Activated B cell treated with CpG ODN at 0.5 μM for 24 hours (primary cell): ENCODE measurements at regions of chr12 and their contacts with region 1.

Region 1: DNA sequence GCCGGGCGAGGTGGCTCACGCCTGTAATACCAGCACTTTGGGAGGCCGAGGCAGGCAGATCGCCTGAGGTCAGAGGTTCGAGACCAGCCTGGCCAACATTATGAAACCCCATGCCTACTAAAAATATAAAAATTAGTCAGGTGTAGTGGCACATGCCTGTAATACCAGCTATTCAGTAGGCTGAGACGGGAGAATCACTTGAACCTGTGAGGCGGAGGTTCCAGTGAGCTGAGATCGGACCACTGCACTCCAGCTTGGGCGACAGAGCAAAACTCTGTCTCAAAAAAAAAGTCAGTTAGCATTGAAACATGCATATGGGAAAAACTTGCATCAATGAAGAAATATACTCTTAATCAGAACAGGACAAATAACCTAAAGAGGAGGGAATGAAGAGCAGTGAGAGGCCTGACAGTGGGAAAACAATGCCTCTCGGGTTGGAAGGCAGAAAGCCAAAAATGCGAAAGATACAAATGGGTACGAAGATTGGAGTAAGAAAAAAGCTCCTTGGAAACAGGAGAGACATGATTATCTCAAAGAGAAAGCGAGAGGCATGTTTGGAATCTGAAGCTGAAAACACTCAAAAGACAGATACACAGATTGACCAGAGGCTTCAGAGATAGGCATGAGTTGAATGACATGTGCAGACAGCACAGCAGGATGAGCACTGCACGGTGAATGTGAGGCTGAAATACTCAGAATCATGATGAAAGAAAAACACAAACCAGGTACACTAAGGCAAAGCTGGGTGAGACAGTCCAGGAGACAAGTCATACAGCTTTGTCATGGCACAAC is 30.6 kb downstream of the RESF1 start:
- DNase-seq: no peak
- ATAC-seq: no peak
- H3K4me3 Mint-ChIP-seq: no peak overlapping the region
- H3K27ac Mint-ChIP-seq: peak overlapping the region; percentile 11
- H3K4me1 Mint-ChIP-seq: peaks cover 41% of the 10 kb centered on the region
- H3K27me3 Mint-ChIP-seq: no peaks in the 10 kb centered on the region
- CTCF ChIP-seq: no peak

Region 2: GRCh38 chr12:31973818-31974217 is 15.9 kb before region 1 on chr12:
- CTCF ChIA-PET with region 1: no interaction called
- POLR2A ChIA-PET with region 1: interaction called, 3 read pairs
- intact Hi-C with region 1: loop called (anchors 2 kb)
- DNase-seq: no peak
- ATAC-seq: no peak
- H3K4me3 Mint-ChIP-seq: no peak overlapping the region
- H3K27ac Mint-ChIP-seq: no peak overlapping the region
- H3K4me1 Mint-ChIP-seq: peaks cover 34% of the 10 kb centered on the region
- H3K27me3 Mint-ChIP-seq: no peaks in the 10 kb centered on the region
- CTCF ChIP-seq: no peak

Region 3: GRCh38 chr12:32051559-32052414 is 62.0 kb after region 1 on chr12:
- CTCF ChIA-PET with region 1: no interaction called
- POLR2A ChIA-PET with region 1: no interaction called
- intact Hi-C with region 1: loop called (anchors 10 kb)
- DNase-seq: no peak
- ATAC-seq: no peak
- H3K4me3 Mint-ChIP-seq: no peak overlapping the region
- H3K27ac Mint-ChIP-seq: no peak overlapping the region
- H3K4me1 Mint-ChIP-seq: no peaks in the 10 kb centered on the region
- H3K27me3 Mint-ChIP-seq: no peaks in the 10 kb centered on the region
- CTCF ChIP-seq: no peak